ENCODE measurements at regions of chr12 and their contacts with region 1.

Region 1: DNA sequence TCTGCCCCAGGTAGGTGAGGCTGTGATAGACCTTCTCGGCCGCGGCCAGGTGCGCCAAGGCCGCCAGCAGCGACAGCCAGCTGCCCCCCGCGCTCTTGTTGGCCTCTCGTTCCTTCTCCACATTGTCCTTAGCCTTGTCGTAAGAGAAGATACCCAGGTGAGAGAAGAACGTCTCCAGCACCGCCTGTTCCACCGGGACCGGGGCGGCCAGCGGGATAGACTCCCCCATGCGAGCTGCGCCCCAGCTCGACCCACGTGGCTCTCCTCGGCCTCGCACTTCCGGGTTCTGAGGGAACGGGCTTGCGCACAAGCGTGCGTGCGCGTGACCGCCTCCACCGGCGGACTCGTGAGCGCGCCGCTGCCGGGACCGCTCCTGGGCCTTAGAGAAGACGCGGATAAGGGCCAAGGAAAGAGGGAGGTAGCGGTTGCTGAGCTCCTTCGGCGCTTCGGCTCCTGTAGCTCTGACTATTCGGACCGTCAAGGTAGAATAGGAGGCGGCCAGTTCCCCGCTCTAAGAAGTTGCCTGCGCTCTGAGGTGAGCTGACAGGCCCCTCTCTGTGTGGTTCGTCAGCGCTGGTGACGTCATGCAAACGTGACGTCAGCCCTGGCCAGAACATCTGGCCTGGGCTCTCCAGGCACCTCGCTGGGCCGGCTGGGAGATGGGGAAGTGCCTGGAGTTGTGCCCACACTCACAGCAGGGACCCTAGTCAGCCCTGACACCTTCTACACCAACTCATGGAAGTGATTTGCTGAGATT is at the start of gene KICS2:
- DNase-seq: peak; percentile 95
- ATAC-seq: peak; percentile 93
- H3K4me3 ChIP-seq: peak within 1 kb of the TSS; percentile 78
- H3K27ac ChIP-seq: peak within 1 kb of the TSS; percentile 83
- H3K4me1 ChIP-seq: peaks cover 14% of the 10 kb centered on the region
- H3K27me3 ChIP-seq: no peaks in the 10 kb centered on the region
- CTCF ChIP-seq: no peak
- total RNA-seq, gene KICS2: 11.9 and 16.4 TPM in 2 replicates

Region 2: GRCh38 chr12:62957233-62957953 is 1264.8 kb before region 1 on chr12:
- CTCF ChIA-PET with region 1: no interaction called
- POLR2A ChIA-PET with region 1: interaction called, 25 read pairs
- intact Hi-C with region 1: no loop called
- DNase-seq: peak; percentile 56
- ATAC-seq: peak; percentile 92
- H3K4me3 ChIP-seq: no peak overlapping the region
- H3K27ac ChIP-seq: no peak overlapping the region
- H3K4me1 ChIP-seq: peaks cover 10% of the 10 kb centered on the region
- H3K27me3 ChIP-seq: no peaks in the 10 kb centered on the region
- CTCF ChIP-seq: no peak

Region 3: GRCh38 chr12:64088431-64089349 is 133.5 kb before region 1 on chr12:
- CTCF ChIA-PET with region 1: no interaction called
- POLR2A ChIA-PET with region 1: no interaction called
- intact Hi-C with region 1: loop called (anchors 5 kb)
- DNase-seq: peak; percentile 98
- ATAC-seq: peak; percentile 96
- H3K4me3 ChIP-seq: peak overlapping the region; percentile 39
- H3K27ac ChIP-seq: peak overlapping the region; percentile 78
- H3K4me1 ChIP-seq: peaks cover 42% of the 10 kb centered on the region
- H3K27me3 ChIP-seq: no peaks in the 10 kb centered on the region
- CTCF ChIP-seq: no peak

Region 4: GRCh38 chr12:64181504-64182291 is 40.5 kb before region 1 on chr12:
- CTCF ChIA-PET with region 1: no interaction called
- POLR2A ChIA-PET with region 1: no interaction called
- intact Hi-C with region 1: loop called (anchors 5 kb)
- DNase-seq: peak; percentile 99
- ATAC-seq: peak; percentile 87
- H3K4me3 ChIP-seq: peak overlapping the region; percentile 44; the same call in 1 of the 2 replicates
- H3K27ac ChIP-seq: peak overlapping the region; percentile 99
- H3K4me1 ChIP-seq: peaks cover 60% of the 10 kb centered on the region
- H3K27me3 ChIP-seq: no peaks in the 10 kb centered on the region
- CTCF ChIP-seq: peak; percentile 77

Measured in PC-3 (cell line).